Right cardiac atrium (tissue), 5 donors: ENCODE measurements at regions of chr2 and their contacts with region 1.

Region 1: GRCh38 chr2:24977631-24978030 is 5.9 kb upstream of the DNAJC27 start:
- DNase-seq: no peak
- ATAC-seq: no peak
- H3K4me3 ChIP-seq: no peak overlapping the region
- H3K27ac ChIP-seq: no peak overlapping the region
- H3K4me1 ChIP-seq: no peaks in the 10 kb centered on the region
- H3K27me3 ChIP-seq: no peaks in the 10 kb centered on the region

Region 2: DNA sequence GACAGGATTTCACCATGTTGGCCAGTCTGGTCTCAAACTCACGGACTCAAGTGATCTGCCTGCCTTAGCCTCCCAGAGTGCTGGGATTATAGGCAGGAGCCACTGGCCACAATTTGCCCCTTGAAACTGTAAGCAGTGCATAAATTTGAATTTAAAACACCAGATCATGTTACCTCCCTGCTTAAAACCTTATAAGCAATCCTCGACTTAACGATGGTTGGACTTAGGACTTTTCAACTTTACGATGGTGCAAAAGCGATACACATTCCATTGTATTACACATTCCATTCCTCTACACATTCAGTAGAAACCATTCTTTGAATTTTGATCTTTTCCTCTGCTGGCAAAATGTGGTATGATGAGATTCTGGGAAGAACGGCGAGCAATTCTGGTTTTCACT is 41.0 kb after region 1 on chr2:
- intact Hi-C with region 1: no loop called
- DNase-seq: no peak
- ATAC-seq: no peak
- H3K4me3 ChIP-seq: no peak overlapping the region
- H3K27ac ChIP-seq: no peak overlapping the region
- H3K4me1 ChIP-seq: no peaks in the 10 kb centered on the region
- H3K27me3 ChIP-seq: no peaks in the 10 kb centered on the region

Region 3: GRCh38 chr2:25190536-25190935 is 212.9 kb after region 1 on chr2:
- intact Hi-C with region 1: loop called in 2 of 4 experiments (anchors 5 to 10 kb)
- DNase-seq: no peak
- ATAC-seq: no peak
- H3K4me3 ChIP-seq: no peak overlapping the region
- H3K27ac ChIP-seq: no peak overlapping the region
- H3K4me1 ChIP-seq: no peaks in the 10 kb centered on the region
- H3K27me3 ChIP-seq: no peaks in the 10 kb centered on the region